Astrocyte of the cerebellum (primary cell): ENCODE measurements at regions of chr11 and their contacts with region 1.

Region 1: GRCh38 chr11:72446902-72447769 is 12.8 kb upstream of the CLPB start:
- DNase-seq: peak; percentile 60
- H3K4me3 ChIP-seq: no peak overlapping the region
- CTCF ChIP-seq: peak; percentile 81

Region 2: DNA sequence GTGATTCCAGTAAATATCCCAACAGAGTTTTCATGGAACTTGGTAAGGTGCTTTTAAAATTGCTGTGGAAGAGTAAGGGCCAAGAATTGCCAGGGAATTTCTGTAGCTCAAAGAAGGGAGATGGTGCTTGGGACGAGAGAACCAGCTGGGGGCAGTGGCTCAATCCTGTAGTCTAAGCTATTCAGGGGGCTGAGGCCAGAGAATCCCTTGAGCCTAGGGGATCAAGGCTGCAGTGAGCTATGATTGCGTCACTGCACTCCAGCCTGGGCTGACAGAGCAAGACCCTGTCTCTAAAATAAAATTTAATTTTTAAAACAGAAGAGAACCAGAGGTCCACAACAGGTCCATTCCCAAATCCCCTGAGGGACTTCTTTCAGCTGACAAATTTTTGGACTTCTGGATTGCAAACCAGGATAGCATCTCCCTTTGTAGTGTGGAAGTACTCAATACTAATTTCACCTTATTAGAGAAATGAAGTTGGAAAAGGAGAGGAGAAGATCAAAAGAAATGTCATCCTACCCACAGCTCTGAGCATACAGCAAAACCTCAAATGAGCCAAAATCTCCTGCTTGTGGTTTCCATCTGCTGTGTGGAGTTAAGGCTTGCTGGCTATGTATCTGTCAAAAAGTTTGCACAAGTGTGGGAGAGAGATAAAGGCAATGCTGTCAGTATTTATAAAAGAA is 46.4 kb after region 1 on chr11:
- in situ Hi-C with region 1: no loop called
- DNase-seq: no peak
- H3K4me3 ChIP-seq: no peak overlapping the region
- CTCF ChIP-seq: no peak

Region 3: DNA sequence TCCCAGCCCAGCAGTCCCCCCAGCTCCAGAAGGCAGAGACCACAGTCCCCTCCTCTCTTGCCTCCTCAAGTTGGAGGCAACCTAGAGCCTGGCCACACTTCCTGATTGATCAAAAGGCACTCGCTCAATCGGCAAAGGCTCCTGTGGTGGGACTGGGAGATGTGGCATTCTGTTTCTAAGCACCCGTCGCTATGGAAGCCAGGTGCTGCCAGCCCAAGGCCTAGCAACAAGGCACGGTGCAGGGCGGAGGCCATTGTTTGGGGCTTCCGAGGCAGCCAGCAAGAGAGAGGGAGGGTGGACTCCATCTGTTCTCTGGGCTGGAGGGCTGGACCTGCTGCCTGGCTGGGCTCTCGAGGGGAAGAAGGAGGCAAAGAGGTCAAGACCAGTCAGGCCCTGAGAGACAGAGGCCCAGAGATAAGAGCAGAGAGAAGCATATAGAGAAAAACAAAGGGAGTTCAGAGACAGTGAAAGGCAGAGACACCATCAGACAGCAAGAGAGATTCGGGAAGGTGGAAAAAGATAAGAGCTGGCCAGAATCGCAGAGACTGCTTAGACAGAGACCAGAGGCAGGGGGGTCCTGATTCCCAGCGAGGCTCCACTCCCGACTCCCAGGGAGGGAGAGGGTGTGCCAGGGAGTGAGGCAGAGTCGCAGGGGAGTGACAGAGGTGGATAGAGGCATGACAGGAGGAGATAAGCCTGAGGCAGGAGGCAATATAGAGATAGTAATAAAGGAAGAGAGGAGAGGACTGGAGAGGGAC is 205.9 kb after region 1 on chr11:
- in situ Hi-C with region 1: loop called (anchors 5 kb)
- DNase-seq: no peak
- H3K4me3 ChIP-seq: no peak overlapping the region
- CTCF ChIP-seq: no peak